ENCODE measurements at regions of chr7 and their contacts with region 1.

Region 1: GRCh38 chr7:96009148-96009547 is 236.8 kb downstream of the DYNC1I1 start:
- DNase-seq: no peak
- ATAC-seq: no peak
- H3K4me3 ChIP-seq: no peak overlapping the region
- H3K27ac ChIP-seq: no peak overlapping the region
- H3K4me1 ChIP-seq: no peaks in the 10 kb centered on the region
- H3K27me3 ChIP-seq: no peaks in the 10 kb centered on the region
- CTCF ChIP-seq: no peak

Region 2: GRCh38 chr7:96131525-96131924 is 122.4 kb after region 1 on chr7:
- CTCF ChIA-PET with region 1: interaction called, 10 read pairs
- POLR2A ChIA-PET with region 1: no interaction called
- intact Hi-C with region 1: no loop called
- DNase-seq: no peak
- ATAC-seq: no peak
- H3K4me3 ChIP-seq: no peak overlapping the region
- H3K27ac ChIP-seq: no peak overlapping the region
- H3K4me1 ChIP-seq: peaks cover 13% of the 10 kb centered on the region
- H3K27me3 ChIP-seq: no peaks in the 10 kb centered on the region
- CTCF ChIP-seq: no peak